ENCODE measurements at regions of chr1 and their contacts with region 1.

Region 1: GRCh38 chr1:167220537-167221125 is at the start of gene POU2F1:
- DNase-seq: peak; percentile 97
- H3K4me3 ChIP-seq: peak within 1 kb of the TSS; percentile 85
- H3K4me3 Mint-ChIP-seq: peak within 1 kb of the TSS; percentile 83
- H3K27ac Mint-ChIP-seq: peak within 1 kb of the TSS; percentile 87
- H3K4me1 ChIP-seq: peaks cover 16% of the 10 kb centered on the region; the same call in 1 of the 2 replicates
- H3K4me1 Mint-ChIP-seq: peaks cover 14% of the 10 kb centered on the region
- H3K27me3 ChIP-seq: no peaks in the 10 kb centered on the region
- H3K27me3 Mint-ChIP-seq: no peaks in the 10 kb centered on the region
- CTCF ChIP-seq: peak; percentile 36 to 87
- total RNA-seq, gene POU2F1: 28.3 and 29.6 TPM in 2 replicates

Region 2: DNA sequence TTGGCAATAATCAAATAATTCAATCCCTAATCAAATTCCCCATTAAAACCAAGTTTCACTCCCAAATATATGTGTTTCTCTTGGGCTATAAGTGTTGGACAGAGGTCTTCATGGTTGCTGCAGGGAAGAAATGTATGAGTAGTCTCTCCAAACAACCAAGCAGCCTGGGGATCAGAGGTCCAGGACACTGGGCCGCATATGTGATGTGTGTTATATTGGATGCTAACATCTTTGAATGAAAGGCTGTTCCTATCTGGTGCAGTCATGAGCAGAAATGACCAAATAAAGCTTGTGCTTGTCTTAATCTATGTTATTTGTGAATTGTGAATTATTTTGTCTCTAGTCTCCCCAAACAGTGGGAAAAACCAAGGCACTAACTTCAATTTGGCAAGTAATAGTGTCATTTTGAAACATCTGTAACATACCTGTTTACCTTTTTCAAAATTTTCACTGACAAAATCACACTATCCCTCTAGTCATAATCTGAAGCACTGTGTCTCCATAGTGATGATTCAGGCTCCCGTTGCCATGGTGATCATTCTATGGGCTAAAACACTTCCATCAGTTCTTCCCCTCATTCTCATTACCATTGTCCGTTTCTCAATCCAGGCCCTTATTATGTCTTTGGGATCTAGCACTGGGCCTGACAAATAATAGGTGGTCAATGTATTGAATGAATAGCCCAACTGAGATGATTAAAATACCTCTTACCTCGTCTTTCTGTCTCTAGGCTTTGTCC is 332.1 kb before region 1 on chr1:
- CTCF ChIA-PET with region 1: no interaction called
- POLR2A ChIA-PET with region 1: no interaction called
- intact Hi-C with region 1: no loop called
- DNase-seq: no peak
- H3K4me3 ChIP-seq: no peak overlapping the region
- H3K4me3 Mint-ChIP-seq: no peak overlapping the region
- H3K27ac Mint-ChIP-seq: no peak overlapping the region
- H3K4me1 ChIP-seq: no peaks in the 10 kb centered on the region
- H3K4me1 Mint-ChIP-seq: no peaks in the 10 kb centered on the region
- H3K27me3 ChIP-seq: no peaks in the 10 kb centered on the region; the same call in 1 of the 2 replicates
- H3K27me3 Mint-ChIP-seq: peaks cover 9% of the 10 kb centered on the region
- CTCF ChIP-seq: no peak

Region 3: DNA sequence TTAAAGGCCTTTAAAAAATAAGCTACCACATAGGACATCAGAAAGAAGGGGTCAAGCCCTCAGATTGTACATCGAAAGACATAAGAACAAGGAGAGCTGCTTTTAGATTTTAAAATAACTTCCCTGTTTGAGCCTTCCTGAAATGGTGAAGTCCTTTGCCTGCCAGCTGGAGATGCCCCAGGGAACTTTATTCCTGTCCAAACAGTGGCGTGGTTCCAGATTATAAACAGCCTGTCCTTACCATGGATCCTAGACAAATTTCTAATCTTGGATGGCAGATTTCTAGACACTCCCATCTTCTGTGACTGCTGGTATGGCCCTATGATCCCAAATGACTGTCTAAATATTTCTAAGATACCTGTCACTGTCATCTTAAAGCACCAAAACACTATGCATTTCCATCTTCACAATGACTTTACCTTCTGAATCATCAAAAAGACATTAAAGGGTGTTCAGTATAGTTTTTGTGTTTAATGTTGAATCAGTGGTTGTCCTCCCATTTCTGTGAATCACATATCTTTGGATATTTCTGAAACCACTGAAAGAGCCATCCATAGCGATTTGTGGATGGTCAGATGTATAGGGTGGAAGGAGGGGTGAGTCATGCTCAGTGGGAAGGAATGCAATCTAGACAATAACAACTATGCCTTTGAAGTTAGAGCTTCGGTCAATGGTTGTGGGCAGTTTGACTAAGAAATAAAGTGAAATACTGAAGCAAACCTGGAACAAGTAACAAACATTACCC is 268.5 kb before region 1 on chr1:
- CTCF ChIA-PET with region 1: no interaction called
- POLR2A ChIA-PET with region 1: no interaction called
- intact Hi-C with region 1: no loop called
- DNase-seq: peak in 1 of 2 experiments; percentile 27
- H3K4me3 ChIP-seq: no peak overlapping the region
- H3K4me3 Mint-ChIP-seq: no peak overlapping the region
- H3K27ac Mint-ChIP-seq: peak overlapping the region; percentile 59
- H3K4me1 ChIP-seq: peaks cover 10% of the 10 kb centered on the region
- H3K4me1 Mint-ChIP-seq: peaks cover 11% of the 10 kb centered on the region
- H3K27me3 ChIP-seq: no peaks in the 10 kb centered on the region
- H3K27me3 Mint-ChIP-seq: peaks cover 3% of the 10 kb centered on the region
- CTCF ChIP-seq: no peak

Region 4: GRCh38 chr1:167066333-167067122 is 154.1 kb before region 1 on chr1:
- CTCF ChIA-PET with region 1: interaction called, 23 read pairs
- POLR2A ChIA-PET with region 1: interaction called, 9 read pairs
- intact Hi-C with region 1: loop called (anchors 1 kb)
- DNase-seq: peak; percentile 69 to 89
- H3K4me3 ChIP-seq: peak overlapping the region; percentile 0; the same call in 1 of the 2 replicates
- H3K4me3 Mint-ChIP-seq: peak overlapping the region; percentile 64
- H3K27ac Mint-ChIP-seq: no peak overlapping the region
- H3K4me1 ChIP-seq: no peaks in the 10 kb centered on the region
- H3K4me1 Mint-ChIP-seq: no peaks in the 10 kb centered on the region
- H3K27me3 ChIP-seq: no peaks in the 10 kb centered on the region
- H3K27me3 Mint-ChIP-seq: no peaks in the 10 kb centered on the region
- CTCF ChIP-seq: peak; percentile 92 to 95

Region 5: GRCh38 chr1:167121375-167122120 is 99.1 kb before region 1 on chr1:
- CTCF ChIA-PET with region 1: interaction called, 6 read pairs
- POLR2A ChIA-PET with region 1: no interaction called
- intact Hi-C with region 1: loop called (anchors 5 kb)
- DNase-seq: no peak
- H3K4me3 ChIP-seq: no peak overlapping the region
- H3K4me3 Mint-ChIP-seq: no peak overlapping the region
- H3K27ac Mint-ChIP-seq: no peak overlapping the region
- H3K4me1 ChIP-seq: no peaks in the 10 kb centered on the region
- H3K4me1 Mint-ChIP-seq: peaks cover 13% of the 10 kb centered on the region
- H3K27me3 ChIP-seq: no peaks in the 10 kb centered on the region
- H3K27me3 Mint-ChIP-seq: peaks cover 10% of the 10 kb centered on the region
- CTCF ChIP-seq: no peak

Region 6: GRCh38 chr1:167198518-167199133 is 22.0 kb before region 1 on chr1:
- CTCF ChIA-PET with region 1: interaction called, 17 read pairs
- POLR2A ChIA-PET with region 1: no interaction called
- intact Hi-C with region 1: no loop called
- DNase-seq: peak in 1 of 2 experiments; percentile 1
- H3K4me3 ChIP-seq: no peak overlapping the region
- H3K4me3 Mint-ChIP-seq: no peak overlapping the region
- H3K27ac Mint-ChIP-seq: no peak overlapping the region
- H3K4me1 ChIP-seq: peaks cover 10% of the 10 kb centered on the region
- H3K4me1 Mint-ChIP-seq: peaks cover 8% of the 10 kb centered on the region
- H3K27me3 ChIP-seq: no peaks in the 10 kb centered on the region
- H3K27me3 Mint-ChIP-seq: no peaks in the 10 kb centered on the region
- CTCF ChIP-seq: no peak

Region 7: DNA sequence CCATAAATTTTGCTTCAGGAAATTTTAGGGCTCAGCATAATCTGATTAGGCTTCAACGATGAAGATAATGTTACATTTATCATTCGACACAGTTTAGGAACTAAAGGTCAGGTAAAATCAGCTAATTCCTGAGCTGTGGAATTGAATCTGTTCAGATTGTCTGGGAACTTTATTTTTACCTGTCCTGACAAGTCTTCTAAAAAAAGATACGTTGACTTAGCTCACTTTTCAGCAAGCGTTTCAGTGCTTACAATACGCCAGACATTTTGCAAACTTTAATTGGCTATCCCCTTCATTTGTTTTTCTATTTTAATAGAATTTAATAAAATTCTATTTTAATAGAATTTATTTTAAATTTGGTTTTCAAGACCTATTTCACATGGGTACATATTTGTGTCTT is 57.9 kb after region 1 on chr1:
- CTCF ChIA-PET with region 1: no interaction called
- POLR2A ChIA-PET with region 1: no interaction called
- intact Hi-C with region 1: no loop called
- DNase-seq: no peak
- H3K4me3 ChIP-seq: no peak overlapping the region
- H3K4me3 Mint-ChIP-seq: no peak overlapping the region
- H3K27ac Mint-ChIP-seq: no peak overlapping the region
- H3K4me1 ChIP-seq: no peaks in the 10 kb centered on the region
- H3K4me1 Mint-ChIP-seq: peaks cover 5% of the 10 kb centered on the region
- H3K27me3 ChIP-seq: no peaks in the 10 kb centered on the region
- H3K27me3 Mint-ChIP-seq: no peaks in the 10 kb centered on the region
- CTCF ChIP-seq: no peak

Region 8: GRCh38 chr1:167533851-167534300 is 313.2 kb after region 1 on chr1:
- CTCF ChIA-PET with region 1: no interaction called
- POLR2A ChIA-PET with region 1: interaction called, 12 read pairs
- intact Hi-C with region 1: loop called (anchors 5 kb)
- DNase-seq: peak; percentile 78 to 83
- H3K4me3 ChIP-seq: no peak overlapping the region
- H3K4me3 Mint-ChIP-seq: no peak overlapping the region
- H3K27ac Mint-ChIP-seq: no peak overlapping the region
- H3K4me1 ChIP-seq: peaks cover 24% of the 10 kb centered on the region
- H3K4me1 Mint-ChIP-seq: peaks cover 7% of the 10 kb centered on the region
- H3K27me3 ChIP-seq: no peaks in the 10 kb centered on the region
- H3K27me3 Mint-ChIP-seq: no peaks in the 10 kb centered on the region
- CTCF ChIP-seq: peak; percentile 85 to 86

Region 9: GRCh38 chr1:167936068-167936929 is 715.7 kb after region 1 on chr1 and contains the start of gene DCAF6:
- CTCF ChIA-PET with region 1: interaction called, 6 read pairs
- POLR2A ChIA-PET with region 1: no interaction called
- intact Hi-C with region 1: loop called (anchors 2 kb)
- DNase-seq: peak; percentile 98
- H3K4me3 ChIP-seq: peak within 1 kb of the TSS; percentile 66
- H3K4me3 Mint-ChIP-seq: peak within 1 kb of the TSS; percentile 82
- H3K27ac Mint-ChIP-seq: peak within 1 kb of the TSS; percentile 86
- H3K4me1 ChIP-seq: peaks cover 15% of the 10 kb centered on the region; the same call in 1 of the 2 replicates
- H3K4me1 Mint-ChIP-seq: peaks cover 6% of the 10 kb centered on the region
- H3K27me3 ChIP-seq: no peaks in the 10 kb centered on the region
- H3K27me3 Mint-ChIP-seq: no peaks in the 10 kb centered on the region
- CTCF ChIP-seq: no peak
- total RNA-seq, gene DCAF6: 41.9 and 53.0 TPM in 2 replicates

Measured in Caco-2 (cell line).